ENCODE measurements at regions of chrX and their contacts with region 1.

Region 1: DNA sequence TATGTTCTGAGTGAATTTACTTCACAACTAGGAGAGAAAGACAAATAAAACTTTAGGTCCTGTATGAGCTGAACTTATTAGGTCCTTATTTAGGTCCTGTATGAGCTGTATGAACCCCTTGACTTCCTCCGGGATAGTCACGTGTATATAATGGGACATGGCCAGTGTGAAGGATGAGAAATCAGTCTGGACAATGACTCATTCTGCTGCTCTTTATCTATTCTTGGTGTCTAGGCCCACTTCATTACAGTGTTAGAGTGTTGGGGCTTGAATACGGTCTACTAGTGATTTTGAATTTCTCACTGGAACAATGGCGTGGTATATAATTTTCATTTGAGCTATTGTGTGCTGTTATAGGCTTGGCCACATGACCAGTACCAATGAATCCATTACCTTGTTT is 21.9 kb downstream of the STK26 start:
- DNase-seq: no peak
- H3K4me3 ChIP-seq: no peak overlapping the region
- H3K4me3 Mint-ChIP-seq: peak overlapping the region in 1 of 8 donors; percentile 35
- H3K27ac ChIP-seq: no peak overlapping the region
- H3K27ac Mint-ChIP-seq: no peak overlapping the region
- H3K4me1 ChIP-seq: peaks cover 29% of the 10 kb centered on the region
- H3K4me1 Mint-ChIP-seq: peaks cover 17 to 62% (median 31%) of the 10 kb centered on the region in 4 donors
- H3K27me3 ChIP-seq: no peaks in the 10 kb centered on the region
- H3K27me3 Mint-ChIP-seq: no peaks in the 10 kb centered on the region

Region 2: GRCh38 chrX:132063856-132064255 is 18.9 kb after region 1 on chrX:
- CTCF ChIA-PET with region 1: no interaction called
- POLR2A ChIA-PET with region 1: no interaction called
- intact Hi-C with region 1: loop called (anchors 2 kb)
- DNase-seq: no peak
- H3K4me3 ChIP-seq: no peak overlapping the region
- H3K4me3 Mint-ChIP-seq: no peak overlapping the region
- H3K27ac ChIP-seq: no peak overlapping the region
- H3K27ac Mint-ChIP-seq: no peak overlapping the region
- H3K4me1 ChIP-seq: no peaks in the 10 kb centered on the region
- H3K4me1 Mint-ChIP-seq: peaks cover 0 to 4% (median 1%) of the 10 kb centered on the region in 4 donors
- H3K27me3 ChIP-seq: no peaks in the 10 kb centered on the region
- H3K27me3 Mint-ChIP-seq: no peaks in the 10 kb centered on the region

Region 3: DNA sequence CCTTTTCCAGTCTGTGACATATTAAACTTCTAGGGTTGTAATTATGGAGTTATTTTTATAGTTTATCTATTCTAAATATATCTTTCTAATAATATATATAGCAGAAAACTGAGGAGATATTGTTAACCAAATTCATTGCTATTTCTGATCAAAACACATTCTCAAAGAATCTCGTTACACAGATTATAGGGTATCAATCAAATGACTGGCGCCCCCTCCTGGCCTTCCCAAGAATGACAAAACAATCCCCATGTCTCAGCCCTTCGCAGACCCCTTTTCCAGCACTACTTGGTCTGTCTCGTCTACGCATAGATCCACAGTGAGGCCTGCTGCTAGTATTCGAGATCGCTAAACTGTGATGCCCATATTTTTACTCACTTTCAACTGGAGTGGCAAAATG is 1731.1 kb after region 1 on chrX:
- CTCF ChIA-PET with region 1: no interaction called
- POLR2A ChIA-PET with region 1: no interaction called
- intact Hi-C with region 1: no loop called
- DNase-seq: peak; percentile 6 to 27 (median 24)
- H3K4me3 ChIP-seq: no peak overlapping the region
- H3K4me3 Mint-ChIP-seq: no peak overlapping the region
- H3K27ac ChIP-seq: no peak overlapping the region
- H3K27ac Mint-ChIP-seq: no peak overlapping the region
- H3K4me1 ChIP-seq: no peaks in the 10 kb centered on the region
- H3K4me1 Mint-ChIP-seq: no peaks in the 10 kb centered on the region
- H3K27me3 ChIP-seq: no peaks in the 10 kb centered on the region
- H3K27me3 Mint-ChIP-seq: peaks cover 0 to 3% of the 10 kb centered on the region in 2 donors

Measured in CD4-positive, alpha-beta memory T cell (primary cell).